Activated CD4-positive, alpha-beta T cell treated with anti-CD3 and anti-CD28 coated beads for 36 hours (primary cell): ENCODE measurements at regions of chr7 and their contacts with region 1.

Region 1: DNA sequence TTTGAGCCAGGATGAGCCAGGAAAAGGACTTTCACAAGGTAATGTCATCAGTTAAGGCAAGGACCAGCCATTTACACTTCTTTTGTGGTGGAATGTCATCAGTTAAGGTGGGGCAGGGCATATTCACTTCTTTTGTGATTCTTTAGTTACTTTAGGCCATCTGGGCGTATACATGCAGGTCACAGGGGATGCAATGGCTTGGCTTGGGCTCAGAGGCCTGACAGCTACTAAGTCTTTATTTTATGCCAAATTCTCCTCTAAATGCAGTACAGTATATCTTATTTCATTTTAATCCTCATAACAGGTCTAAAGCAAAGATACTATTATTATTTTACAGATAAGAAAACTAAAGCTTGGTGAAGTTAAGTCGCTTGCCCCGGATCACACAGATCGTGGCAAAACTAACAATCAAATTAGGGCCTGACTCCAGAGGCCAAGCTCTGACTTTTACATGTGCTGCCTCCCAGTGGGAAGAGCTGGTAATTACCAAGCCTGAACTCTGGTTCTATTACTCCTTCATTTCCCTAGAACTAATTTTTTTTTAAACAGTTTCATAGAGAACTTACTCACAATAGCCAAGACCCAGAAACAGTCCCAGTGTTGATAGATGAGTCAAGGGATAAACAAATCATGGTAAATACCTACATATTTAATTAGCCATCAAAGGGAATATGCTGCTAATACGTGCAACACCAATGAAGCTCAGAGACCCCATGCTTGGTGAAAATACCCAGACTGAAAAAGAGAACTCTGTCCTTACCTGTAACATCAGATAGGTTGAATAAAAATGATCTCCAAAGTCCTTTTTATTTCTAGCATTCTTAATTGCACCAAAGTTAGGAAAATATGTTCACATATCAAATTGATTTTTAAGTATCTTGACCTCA is 35.4 kb downstream of the C7orf25 start:
- DNase-seq: peak; percentile 80
- ATAC-seq: peak; percentile 73
- H3K4me3 Mint-ChIP-seq: no peak overlapping the region
- H3K27ac Mint-ChIP-seq: no peak overlapping the region
- H3K4me1 Mint-ChIP-seq: no peaks in the 10 kb centered on the region
- H3K27me3 Mint-ChIP-seq: no peaks in the 10 kb centered on the region

Region 2: DNA sequence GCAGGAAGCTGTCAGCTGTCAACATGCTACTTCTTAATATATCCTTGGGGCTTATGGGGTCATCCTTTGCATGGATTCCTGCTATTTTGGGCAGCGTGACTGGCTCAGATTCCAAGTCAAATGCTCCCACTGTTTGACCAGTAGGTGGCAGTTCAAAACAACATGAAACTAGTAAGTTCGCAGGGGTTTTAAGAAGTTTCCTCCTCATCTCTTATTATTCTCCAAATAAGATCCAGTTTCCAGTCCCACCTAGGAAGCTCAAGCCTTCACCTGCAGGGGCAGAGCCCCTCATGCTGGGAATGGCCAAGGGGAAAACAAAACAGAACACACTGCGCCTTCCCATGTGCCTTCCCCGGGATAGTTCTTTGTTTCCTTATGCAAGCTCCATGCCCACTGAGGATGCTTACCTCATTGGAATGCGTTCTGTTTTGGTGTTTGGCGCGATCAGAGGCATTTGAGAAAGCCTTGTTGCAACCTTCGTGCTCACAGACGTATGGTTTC is 899.2 kb before region 1 on chr7:
- CTCF ChIA-PET with region 1: interaction called, 5 read pairs
- POLR2A ChIA-PET with region 1: no interaction called
- intact Hi-C with region 1: loop called in 1 of 2 experiments (anchors 5 kb)
- DNase-seq: no peak
- ATAC-seq: no peak
- H3K4me3 Mint-ChIP-seq: no peak overlapping the region
- H3K27ac Mint-ChIP-seq: no peak overlapping the region
- H3K4me1 Mint-ChIP-seq: no peaks in the 10 kb centered on the region
- H3K27me3 Mint-ChIP-seq: peaks cover 10% of the 10 kb centered on the region

Region 3: DNA sequence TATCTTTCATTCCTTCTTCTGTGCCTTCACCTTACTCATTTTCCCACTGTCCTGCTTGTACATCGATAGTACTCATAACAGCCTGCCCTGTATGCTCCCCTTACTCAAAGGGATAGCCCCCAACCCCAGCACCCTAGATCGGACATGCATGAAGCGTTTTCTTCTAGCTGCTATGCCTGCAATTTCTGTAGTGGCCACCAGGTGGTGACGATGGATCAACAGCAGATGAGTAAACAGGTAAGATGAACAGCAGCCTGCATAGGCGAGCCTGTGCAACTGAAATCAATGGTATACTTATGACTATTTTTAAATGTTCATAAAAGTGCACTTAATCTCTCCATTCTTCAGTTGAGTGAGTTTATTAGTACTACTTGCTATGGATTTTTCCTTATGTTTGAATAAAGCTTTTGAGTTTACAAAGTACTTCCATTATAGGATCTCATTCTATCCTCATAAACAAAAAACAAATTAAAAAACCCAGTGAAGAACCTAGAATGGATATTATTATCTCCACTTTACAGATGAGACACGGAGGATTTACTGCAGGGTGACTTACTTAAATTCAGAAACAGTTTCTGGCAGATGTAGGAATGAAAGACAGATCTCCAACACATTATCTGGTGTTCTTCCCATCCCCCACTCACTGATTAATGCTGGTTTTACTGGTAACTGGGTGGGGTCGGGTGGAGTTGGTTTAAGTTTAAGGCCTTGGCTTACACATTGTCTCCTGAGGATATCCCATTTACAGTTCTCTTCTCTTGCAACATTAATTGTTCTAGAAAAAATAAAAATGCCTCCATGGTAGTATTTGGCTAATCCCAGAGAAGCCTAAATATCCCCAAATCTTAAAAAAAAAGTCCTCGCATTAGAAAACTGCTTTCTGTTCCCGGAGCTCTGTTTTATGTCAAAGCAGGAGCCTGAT is 861.5 kb before region 1 on chr7:
- CTCF ChIA-PET with region 1: interaction called, 4 read pairs
- POLR2A ChIA-PET with region 1: no interaction called
- intact Hi-C with region 1: loop called in 1 of 2 experiments (anchors 5 kb)
- DNase-seq: peak; percentile 71
- ATAC-seq: no peak
- H3K4me3 Mint-ChIP-seq: no peak overlapping the region
- H3K27ac Mint-ChIP-seq: no peak overlapping the region
- H3K4me1 Mint-ChIP-seq: no peaks in the 10 kb centered on the region
- H3K27me3 Mint-ChIP-seq: peaks cover 28% of the 10 kb centered on the region